IMR-90 (cell line): ENCODE measurements at regions of chr2 and their contacts with region 1.

Region 1: DNA sequence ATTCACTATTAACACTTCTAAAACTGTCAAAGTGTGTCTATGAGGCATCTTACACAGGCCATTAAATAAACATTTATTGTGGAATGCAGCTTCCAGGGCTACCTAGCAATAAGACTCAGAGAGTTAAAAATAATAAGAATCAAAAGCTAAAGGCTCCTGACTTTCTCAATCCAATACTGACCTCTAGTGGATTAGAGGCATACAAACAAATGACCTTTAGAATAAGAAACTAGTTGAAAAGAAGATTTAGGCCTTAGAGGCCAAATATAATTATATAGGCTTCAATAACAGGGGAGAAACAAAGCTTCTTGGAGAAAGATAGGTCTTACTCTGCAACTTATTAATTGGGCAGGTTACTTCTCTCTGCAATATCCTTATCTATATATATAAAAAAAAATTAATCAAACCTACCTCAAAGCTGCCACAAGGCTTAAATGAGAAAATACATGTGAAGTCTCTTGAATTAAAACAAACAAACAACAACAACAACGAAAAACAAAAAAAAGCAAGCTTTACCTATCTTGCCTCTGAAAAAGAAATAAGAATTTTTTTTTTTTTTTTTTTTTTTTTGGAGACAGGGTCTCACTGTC is 246.1 kb downstream of the EXOC6B start:
- DNase-seq: peak; percentile 64
- ATAC-seq: peak; percentile 65
- H3K4me3 ChIP-seq: no peak overlapping the region
- H3K27ac ChIP-seq: no peak overlapping the region
- H3K4me1 ChIP-seq: peaks cover 2% of the 10 kb centered on the region; the same call in 1 of the 2 replicates
- H3K27me3 ChIP-seq: no peaks in the 10 kb centered on the region
- CTCF ChIP-seq: peak; percentile 75
- POLR2A ChIP-seq: no peak
- RAD21 ChIP-seq: peak; percentile 85

Region 2: DNA sequence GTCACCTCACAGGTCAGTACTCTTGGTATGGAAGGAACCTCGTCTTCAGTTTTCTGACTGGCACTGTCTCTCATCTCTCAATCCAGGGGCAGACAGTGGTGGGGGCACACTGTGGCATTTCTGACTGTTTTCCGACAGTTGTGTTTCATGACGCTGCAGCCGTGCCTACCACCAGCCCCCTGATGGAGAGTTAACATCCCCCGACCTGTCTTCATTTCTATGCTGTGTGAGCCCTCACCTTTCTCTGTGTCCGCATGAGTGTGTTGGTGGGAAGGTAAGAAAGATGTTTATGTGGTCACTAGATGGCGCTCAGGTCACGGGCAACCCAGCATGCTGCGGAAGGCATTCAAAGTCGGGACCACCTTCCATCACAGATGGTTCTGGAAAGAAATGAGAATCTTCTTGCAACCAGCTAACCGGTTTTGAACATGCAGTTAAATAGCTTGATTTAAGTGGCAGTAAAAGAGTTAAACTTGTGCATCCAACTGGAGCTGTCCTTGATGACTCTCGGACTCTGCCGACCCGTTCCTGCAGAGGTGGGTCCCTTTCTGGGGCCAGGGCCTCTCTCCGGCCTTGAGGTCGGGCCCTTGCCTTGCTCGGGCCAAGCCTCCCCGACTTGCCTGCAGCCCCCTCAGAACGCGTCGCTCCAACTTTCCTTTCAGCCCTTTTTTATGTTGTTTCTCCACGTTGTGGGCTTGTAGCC is 1034.0 kb before region 1 on chr2:
- CTCF ChIA-PET with region 1: no interaction called
- POLR2A ChIA-PET with region 1: no interaction called
- dilution Hi-C with region 1: no loop called
- in situ Hi-C with region 1: loop called (anchors 25 kb)
- intact Hi-C with region 1: loop called (anchors 1 kb)
- DNase-seq: peak; percentile 55
- ATAC-seq: peak; percentile 79
- H3K4me3 ChIP-seq: no peak overlapping the region
- H3K27ac ChIP-seq: no peak overlapping the region
- H3K4me1 ChIP-seq: no peaks in the 10 kb centered on the region
- H3K27me3 ChIP-seq: peaks cover 24% of the 10 kb centered on the region
- CTCF ChIP-seq: peak; percentile 82
- POLR2A ChIP-seq: no peak
- RAD21 ChIP-seq: peak; percentile 83

Region 3: GRCh38 chr2:71798266-71799012 is 781.2 kb before region 1 on chr2:
- CTCF ChIA-PET with region 1: interaction called, 3 read pairs
- POLR2A ChIA-PET with region 1: no interaction called
- dilution Hi-C with region 1: no loop called
- in situ Hi-C with region 1: no loop called
- intact Hi-C with region 1: loop called (anchors 1 kb)
- DNase-seq: peak; percentile 10
- ATAC-seq: peak; percentile 62; the same call in 1 of the 2 replicates
- H3K4me3 ChIP-seq: no peak overlapping the region
- H3K27ac ChIP-seq: no peak overlapping the region
- H3K4me1 ChIP-seq: peaks cover 12% of the 10 kb centered on the region
- H3K27me3 ChIP-seq: peaks cover 10% of the 10 kb centered on the region
- CTCF ChIP-seq: peak; percentile 61
- POLR2A ChIP-seq: no peak
- RAD21 ChIP-seq: peak; percentile 47

Region 4: DNA sequence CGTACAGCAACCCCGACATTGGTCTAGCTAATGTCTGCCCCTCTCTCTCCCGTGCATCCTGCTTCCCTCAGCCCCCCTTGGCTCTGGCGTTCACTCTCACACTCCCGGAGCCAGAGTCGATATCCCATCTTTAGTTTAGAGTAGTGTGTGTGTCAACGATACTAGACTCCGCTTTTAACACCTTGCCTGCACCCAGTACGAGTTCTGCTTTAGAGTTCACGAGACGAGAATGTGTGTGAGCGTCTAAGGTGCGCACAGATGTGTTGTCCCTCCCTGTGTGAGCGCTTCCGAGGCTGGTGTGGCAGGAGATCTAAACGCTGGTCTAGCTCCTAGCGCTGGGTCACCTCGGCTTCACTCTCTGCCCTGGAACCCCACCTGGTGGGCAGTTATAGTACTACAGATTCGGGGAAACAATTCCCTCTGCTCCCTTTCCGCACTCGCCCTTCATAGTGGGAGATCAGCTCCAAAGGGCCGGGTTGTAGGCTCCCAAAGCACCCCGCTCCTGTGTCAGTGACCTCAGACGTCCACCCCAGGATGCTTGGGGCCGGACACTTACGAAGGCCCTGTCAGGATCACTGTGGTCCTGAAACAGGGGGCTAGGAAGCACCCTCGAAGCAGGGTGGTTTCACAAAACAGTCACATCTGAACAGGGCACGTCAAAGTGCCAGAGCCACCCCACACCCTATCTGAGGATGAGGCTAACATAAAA is 429.4 kb before region 1 on chr2:
- CTCF ChIA-PET with region 1: interaction called, 6 read pairs
- POLR2A ChIA-PET with region 1: no interaction called
- dilution Hi-C with region 1: no loop called
- in situ Hi-C with region 1: loop called (anchors 10 kb)
- intact Hi-C with region 1: loop called (anchors 1 kb)
- DNase-seq: peak; percentile 64
- ATAC-seq: peak; percentile 86
- H3K4me3 ChIP-seq: no peak overlapping the region; the same call in 1 of the 2 replicates
- H3K27ac ChIP-seq: no peak overlapping the region
- H3K4me1 ChIP-seq: peaks cover 14% of the 10 kb centered on the region; the same call in 1 of the 2 replicates
- H3K27me3 ChIP-seq: peaks cover 89% of the 10 kb centered on the region
- CTCF ChIP-seq: peak; percentile 88
- POLR2A ChIP-seq: no peak
- RAD21 ChIP-seq: peak; percentile 91